ENCODE measurements at regions of chr12 and their contacts with region 1.

Region 1: GRCh38 chr12:106223485-106224354 is 24.1 kb downstream of the CKAP4 start:
- DNase-seq: peak; percentile 63
- H3K4me3 ChIP-seq: no peak overlapping the region
- H3K27ac ChIP-seq: no peak overlapping the region
- H3K4me1 ChIP-seq: peaks cover 15% of the 10 kb centered on the region
- H3K27me3 ChIP-seq: no peaks in the 10 kb centered on the region
- CTCF ChIP-seq: peak; percentile 97

Region 2: GRCh38 chr12:105420659-105421240 is 803.0 kb before region 1 on chr12:
- intact Hi-C with region 1: loop called (anchors 5 kb)
- DNase-seq: peak; percentile 66
- H3K4me3 ChIP-seq: no peak overlapping the region
- H3K27ac ChIP-seq: no peak overlapping the region
- H3K4me1 ChIP-seq: peaks cover 5% of the 10 kb centered on the region
- H3K27me3 ChIP-seq: no peaks in the 10 kb centered on the region
- CTCF ChIP-seq: peak; percentile 90

Region 3: GRCh38 chr12:106179086-106179485 is 44.6 kb before region 1 on chr12:
- intact Hi-C with region 1: no loop called
- DNase-seq: no peak
- H3K4me3 ChIP-seq: no peak overlapping the region
- H3K27ac ChIP-seq: peak overlapping the region; percentile 69
- H3K4me1 ChIP-seq: peaks cover 28% of the 10 kb centered on the region
- H3K27me3 ChIP-seq: no peaks in the 10 kb centered on the region
- CTCF ChIP-seq: no peak

Region 4: GRCh38 chr12:106282457-106283097 is 58.9 kb after region 1 on chr12:
- intact Hi-C with region 1: loop called (anchors 5 kb)
- DNase-seq: peak; percentile 38
- H3K4me3 ChIP-seq: no peak overlapping the region
- H3K27ac ChIP-seq: no peak overlapping the region
- H3K4me1 ChIP-seq: peaks cover 33% of the 10 kb centered on the region
- H3K27me3 ChIP-seq: no peaks in the 10 kb centered on the region
- CTCF ChIP-seq: peak; percentile 78

Region 5: DNA sequence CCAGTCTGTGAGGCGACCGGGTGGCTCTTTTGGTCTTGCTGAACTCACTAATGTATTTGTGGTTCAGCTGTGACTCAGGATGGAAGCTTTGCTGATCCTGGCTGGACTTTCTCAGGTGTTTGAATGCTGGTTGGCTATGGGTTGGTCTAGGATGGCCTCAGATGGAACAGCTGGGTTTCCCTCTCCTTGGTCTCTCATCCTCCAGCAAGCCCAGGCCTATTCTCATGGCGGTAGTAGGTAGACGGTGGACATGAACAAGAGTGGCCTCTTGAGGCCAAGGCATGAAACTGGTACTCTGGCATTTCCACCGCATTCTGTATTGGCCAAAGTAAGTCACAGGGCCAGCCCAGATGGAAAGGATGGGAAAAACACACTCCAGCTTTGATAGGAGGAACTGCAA is 122.0 kb after region 1 on chr12:
- intact Hi-C with region 1: loop called (anchors 5 kb)
- DNase-seq: no peak
- H3K4me3 ChIP-seq: no peak overlapping the region
- H3K27ac ChIP-seq: peak overlapping the region; percentile 87
- H3K4me1 ChIP-seq: peaks cover 50% of the 10 kb centered on the region
- H3K27me3 ChIP-seq: no peaks in the 10 kb centered on the region
- CTCF ChIP-seq: peak; percentile 62

Region 6: DNA sequence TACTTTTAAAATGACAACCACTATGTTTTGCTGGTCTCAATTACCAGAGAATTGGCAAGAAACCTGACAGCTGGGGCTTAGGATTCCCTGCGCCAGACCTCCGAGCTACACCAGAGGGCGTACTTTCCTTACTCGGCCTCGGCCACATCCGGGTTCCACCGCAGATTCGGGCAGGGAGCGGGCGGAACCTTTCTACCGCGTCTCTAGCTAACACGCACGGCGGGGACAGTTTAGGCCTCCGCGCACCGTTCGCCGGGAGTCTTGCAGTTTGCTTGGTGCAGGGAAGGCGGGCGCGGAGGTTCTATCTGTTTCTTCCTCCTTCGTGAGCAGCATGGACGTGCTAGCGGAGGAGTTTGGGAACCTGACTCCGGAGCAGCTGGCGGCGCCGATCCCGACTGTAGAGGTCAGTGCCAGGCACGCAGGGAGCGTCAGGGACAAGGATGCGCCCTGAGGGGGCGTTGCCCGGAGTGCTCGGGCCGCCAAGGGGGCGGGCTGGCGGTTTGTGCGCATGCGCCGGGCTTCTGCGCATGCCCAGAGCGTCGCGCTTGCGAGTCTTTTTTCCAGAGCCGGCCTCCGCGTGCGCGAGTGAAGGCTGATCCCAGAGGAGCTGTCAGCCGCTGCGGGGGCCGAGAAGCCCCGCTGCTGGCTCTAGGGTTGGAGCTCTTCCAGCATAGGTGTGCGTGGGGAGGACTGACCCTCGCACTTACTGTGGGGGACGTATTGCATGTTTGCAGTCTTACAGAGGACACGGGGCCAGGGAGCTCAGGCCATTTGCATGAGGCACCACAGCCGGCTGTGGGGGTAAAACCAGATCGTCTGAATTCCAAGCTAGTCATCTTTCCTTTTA is 134.1 kb after region 1 on chr12 and contains the start of gene POLR3B:
- intact Hi-C with region 1: no loop called
- DNase-seq: peak; percentile 95
- H3K4me3 ChIP-seq: peak within 1 kb of the TSS; percentile 81
- H3K27ac ChIP-seq: peak within 1 kb of the TSS; percentile 99
- H3K4me1 ChIP-seq: peaks cover 27% of the 10 kb centered on the region
- H3K27me3 ChIP-seq: no peaks in the 10 kb centered on the region
- CTCF ChIP-seq: peak; percentile 95
- total RNA-seq, gene POLR3B: 8.5 TPM

Measured in left ventricle myocardium inferior (tissue), 1 donor.